ENCODE measurements at regions of chr5 and their contacts with region 1.

Region 1: GRCh38 chr5:96868603-96869371 is 7.5 kb upstream of the ERAP2 start:
- DNase-seq: peak in 1 of 3 donors; percentile 42
- ATAC-seq: peak; percentile 96
- H3K4me3 ChIP-seq: no peak overlapping the region
- H3K4me1 ChIP-seq: no peaks in the 10 kb centered on the region
- CTCF ChIP-seq: peak; percentile 85

Region 2: GRCh38 chr5:96816411-96816939 is 52.3 kb before region 1 on chr5:
- intact Hi-C with region 1: loop called in 1 of 2 experiments (anchors 10 kb)
- DNase-seq: no peak
- ATAC-seq: peak; percentile 85
- H3K4me3 ChIP-seq: no peak overlapping the region
- H3K4me1 ChIP-seq: no peaks in the 10 kb centered on the region
- CTCF ChIP-seq: no peak

Measured in mucosa of descending colon (tissue), 3 donors.